ENCODE measurements at regions of chr12 and their contacts with region 1.

Region 1: GRCh38 chr12:32896432-32897273 is at the start of gene PKP2:
- DNase-seq: peak; percentile 52
- ATAC-seq: peak; percentile 94
- total RNA-seq, gene PKP2: 124 to 148 TPM

Region 2: DNA sequence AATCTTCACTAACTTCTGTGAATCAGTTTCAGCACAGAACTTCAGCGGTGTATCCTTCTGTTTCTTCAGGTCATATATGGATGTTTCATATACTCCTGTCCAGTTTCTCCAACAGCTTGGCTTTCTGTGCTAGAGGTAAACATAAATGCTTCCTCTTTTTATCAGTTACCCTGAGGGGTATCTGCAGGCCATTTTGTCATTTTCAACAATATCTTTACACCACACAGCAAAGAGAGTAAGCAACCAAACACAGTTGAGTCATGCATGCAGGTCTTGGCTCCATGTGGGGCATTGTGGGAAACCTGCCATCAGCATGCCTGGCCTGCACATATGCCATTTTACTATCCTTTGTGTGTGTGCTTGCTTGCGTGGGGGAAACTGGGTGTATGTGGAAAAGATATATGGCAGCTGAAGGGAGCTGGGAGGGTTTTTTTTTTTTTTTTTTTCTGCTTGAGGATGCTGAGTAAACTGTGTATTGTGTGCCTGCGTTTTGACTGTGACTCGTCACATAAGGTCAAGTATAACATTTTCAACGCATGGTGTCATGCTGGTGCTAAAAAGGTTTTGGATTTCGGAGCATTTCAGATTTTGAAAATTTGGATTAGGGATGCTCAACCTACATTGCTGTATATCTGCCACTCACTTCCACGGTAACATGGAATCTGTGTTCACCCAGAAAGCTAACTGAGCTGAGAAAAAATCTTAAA is 84.8 kb before region 1 on chr12:
- intact Hi-C with region 1: loop called (anchors 5 to 10 kb)
- DNase-seq: no peak
- ATAC-seq: peak in 1 of 2 donors; percentile 47